Astrocyte of the cerebellum (primary cell): ENCODE measurements at regions of chr9 and their contacts with region 1.

Region 1: GRCh38 chr9:80213613-80214012 is 641.8 kb downstream of the TLE4 start:
- DNase-seq: no peak
- H3K4me3 ChIP-seq: no peak overlapping the region
- CTCF ChIP-seq: no peak

Region 2: GRCh38 chr9:80282766-80283165 is 69.2 kb after region 1 on chr9:
- in situ Hi-C with region 1: loop called (anchors 5 kb)
- DNase-seq: no peak
- H3K4me3 ChIP-seq: no peak overlapping the region
- CTCF ChIP-seq: no peak